ENCODE measurements at regions of chr9 and their contacts with region 1.

Region 1: DNA sequence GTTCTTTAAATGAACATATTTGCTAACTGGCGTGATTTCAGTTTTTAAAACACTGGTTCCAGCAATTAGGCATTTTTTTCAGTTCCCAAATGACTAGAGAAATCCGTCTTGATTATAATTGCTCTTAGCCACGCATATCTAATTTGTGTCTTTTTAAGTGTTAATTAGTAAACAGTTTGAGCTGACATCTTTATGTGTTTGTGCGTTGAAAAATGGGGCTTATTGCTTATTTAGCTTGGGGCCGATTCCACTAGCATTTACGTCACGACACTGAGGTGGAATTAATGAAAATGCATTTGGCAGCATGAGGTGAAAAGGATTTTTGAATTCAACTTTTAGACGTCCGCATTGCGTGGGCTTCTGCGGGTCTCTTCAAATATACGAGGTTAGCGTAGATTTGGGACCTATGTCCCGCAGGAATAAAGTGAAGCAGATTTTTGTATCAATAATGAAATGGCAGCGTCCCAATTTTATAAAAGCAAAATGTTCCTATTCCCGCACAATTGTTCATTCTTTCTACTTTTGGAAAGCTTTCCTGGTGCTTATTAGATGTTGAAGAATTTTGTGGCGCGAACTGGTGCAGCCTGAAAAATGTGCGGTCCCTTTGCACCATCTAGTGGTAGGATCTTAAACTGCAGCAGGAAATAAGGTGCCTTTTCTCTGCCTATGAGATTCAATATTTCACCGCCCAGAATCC is 122.7 kb upstream of the LMX1B start:
- DNase-seq: no peak
- ATAC-seq: peak; percentile 71
- H3K4me3 Mint-ChIP-seq: no peak overlapping the region
- H3K27ac Mint-ChIP-seq: no peak overlapping the region
- H3K4me1 Mint-ChIP-seq: peaks cover 8% of the 10 kb centered on the region
- H3K27me3 Mint-ChIP-seq: peaks cover 6% of the 10 kb centered on the region
- CTCF ChIP-seq: peak; percentile 64

Region 2: DNA sequence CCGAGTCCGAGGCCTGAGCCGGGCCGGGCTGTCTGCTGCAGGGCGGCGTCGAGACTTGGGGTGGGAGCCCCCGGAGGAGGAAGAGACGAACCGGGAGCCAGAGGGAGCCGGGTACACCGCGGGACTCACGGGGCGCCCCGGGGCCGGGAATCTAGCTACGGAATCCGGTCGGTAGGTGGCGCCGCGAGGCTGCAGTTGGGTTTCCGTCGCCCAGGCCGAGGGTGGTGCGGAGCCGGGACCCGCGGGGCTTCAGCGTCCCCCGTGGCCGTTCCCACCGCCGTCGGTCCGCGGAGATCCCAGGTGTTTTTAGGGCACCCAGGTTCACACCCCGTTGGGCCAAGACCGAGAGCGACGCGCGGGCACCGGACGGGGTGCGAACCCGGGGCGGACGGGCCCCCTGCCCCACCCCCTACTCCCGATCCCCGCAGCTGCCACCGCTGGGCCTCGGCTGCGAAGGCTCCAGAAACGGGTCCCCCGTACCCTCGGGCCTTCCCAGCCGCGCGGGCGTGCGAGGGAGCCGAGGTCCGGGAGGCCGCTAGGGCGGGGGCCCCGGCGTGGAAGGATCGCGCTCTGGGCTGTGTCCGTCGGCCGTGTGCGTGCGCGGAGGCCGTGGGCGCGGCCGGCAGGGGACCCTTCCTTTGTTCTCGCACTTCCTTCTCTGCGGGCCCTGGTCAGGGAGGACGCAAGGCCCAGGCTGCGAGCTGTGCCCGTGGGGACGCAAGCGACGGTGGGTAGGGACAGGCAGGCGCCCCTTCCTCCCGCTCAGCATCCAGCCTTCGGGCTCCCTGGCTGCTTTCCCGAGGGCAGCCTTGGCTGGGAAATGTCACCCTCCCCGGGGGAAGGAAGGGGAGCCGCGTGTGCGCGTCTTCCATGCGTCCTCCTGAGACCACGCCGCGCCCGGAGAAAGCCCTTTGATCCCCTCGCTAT is 1082.8 kb before region 1 on chr9:
- CTCF ChIA-PET with region 1: interaction called, 30 read pairs
- POLR2A ChIA-PET with region 1: no interaction called
- intact Hi-C with region 1: loop called (anchors 1 kb)
- DNase-seq: peak; percentile 79
- ATAC-seq: peak; percentile 86
- H3K4me3 Mint-ChIP-seq: peak overlapping the region; percentile 75
- H3K27ac Mint-ChIP-seq: no peak overlapping the region
- H3K4me1 Mint-ChIP-seq: peaks cover 16% of the 10 kb centered on the region
- H3K27me3 Mint-ChIP-seq: peaks cover 23% of the 10 kb centered on the region
- CTCF ChIP-seq: peak; percentile 68

Region 3: DNA sequence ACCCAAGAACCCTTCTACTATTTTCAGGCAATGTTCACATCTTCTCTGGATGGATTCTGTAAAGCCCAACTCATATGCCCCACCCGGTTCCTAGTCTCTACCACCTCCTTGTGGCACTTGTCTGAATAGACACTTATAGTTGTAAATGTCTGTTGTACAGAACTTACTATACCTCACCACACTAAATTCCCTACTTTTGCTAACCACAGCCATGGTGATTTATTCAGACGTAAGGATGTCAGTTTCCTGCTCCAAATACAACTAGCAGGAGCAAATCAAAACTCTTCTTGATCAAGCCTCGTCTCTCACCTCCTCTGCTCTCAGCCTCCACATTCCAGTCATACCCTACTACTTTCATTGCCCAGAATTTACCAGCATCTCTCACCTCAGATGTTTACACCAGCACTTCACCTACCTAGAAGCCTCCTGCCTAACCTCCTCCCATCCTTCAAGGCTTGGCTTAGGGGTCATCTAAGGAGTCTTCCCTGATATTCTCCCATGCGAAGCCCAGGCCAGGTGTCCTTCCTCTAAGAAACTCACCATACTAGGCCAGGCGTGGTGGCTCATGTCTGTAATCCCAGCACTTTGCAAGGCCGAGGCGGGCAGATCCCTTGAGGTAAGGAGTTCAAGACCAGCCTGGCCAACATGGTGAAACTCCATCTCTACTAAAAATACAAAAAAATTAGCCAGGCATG is 859.5 kb before region 1 on chr9:
- CTCF ChIA-PET with region 1: no interaction called
- POLR2A ChIA-PET with region 1: no interaction called
- intact Hi-C with region 1: loop called (anchors 10 kb)
- DNase-seq: no peak
- ATAC-seq: no peak
- H3K4me3 Mint-ChIP-seq: peak overlapping the region; percentile 59
- H3K27ac Mint-ChIP-seq: peak overlapping the region; percentile 90
- H3K4me1 Mint-ChIP-seq: peaks cover 84% of the 10 kb centered on the region
- H3K27me3 Mint-ChIP-seq: no peaks in the 10 kb centered on the region
- CTCF ChIP-seq: no peak

Region 4: GRCh38 chr9:126228781-126229444 is 262.1 kb before region 1 on chr9:
- CTCF ChIA-PET with region 1: interaction called, 4 read pairs
- POLR2A ChIA-PET with region 1: no interaction called
- intact Hi-C with region 1: loop called (anchors 1 kb)
- DNase-seq: peak; percentile 62
- ATAC-seq: peak; percentile 99
- H3K4me3 Mint-ChIP-seq: no peak overlapping the region
- H3K27ac Mint-ChIP-seq: no peak overlapping the region
- H3K4me1 Mint-ChIP-seq: peaks cover 1% of the 10 kb centered on the region
- H3K27me3 Mint-ChIP-seq: peaks cover 35% of the 10 kb centered on the region
- CTCF ChIP-seq: no peak

Region 5: DNA sequence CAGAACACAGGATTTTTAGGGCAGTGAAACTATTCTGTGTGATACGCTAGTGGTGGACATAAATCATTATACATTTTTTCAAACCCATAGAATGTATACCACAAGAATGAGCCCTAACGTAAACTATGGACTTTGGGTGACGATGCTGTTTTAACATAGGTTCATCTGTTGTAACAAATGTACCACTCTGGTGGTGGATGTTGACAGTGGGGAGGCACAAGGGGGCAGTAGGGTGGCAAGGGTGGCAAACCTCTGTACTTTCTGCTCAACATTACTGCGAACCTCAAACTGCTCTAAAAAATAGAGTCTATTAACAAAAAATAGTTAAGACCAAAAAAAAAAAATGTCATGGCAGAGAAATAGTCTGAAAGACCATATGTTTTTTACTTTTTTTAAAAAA is 173.5 kb before region 1 on chr9:
- CTCF ChIA-PET with region 1: interaction called, 38 read pairs
- POLR2A ChIA-PET with region 1: interaction called, 3 read pairs
- intact Hi-C with region 1: loop called (anchors 1 kb)
- DNase-seq: no peak
- ATAC-seq: peak; percentile 52
- H3K4me3 Mint-ChIP-seq: no peak overlapping the region
- H3K27ac Mint-ChIP-seq: no peak overlapping the region
- H3K4me1 Mint-ChIP-seq: no peaks in the 10 kb centered on the region
- H3K27me3 Mint-ChIP-seq: peaks cover 16% of the 10 kb centered on the region
- CTCF ChIP-seq: no peak

Region 6: GRCh38 chr9:126411225-126411947 is 79.6 kb before region 1 on chr9:
- CTCF ChIA-PET with region 1: interaction called, 3 read pairs
- POLR2A ChIA-PET with region 1: no interaction called
- intact Hi-C with region 1: loop called (anchors 5 kb)
- DNase-seq: no peak
- ATAC-seq: peak; percentile 88
- H3K4me3 Mint-ChIP-seq: peak overlapping the region; percentile 81
- H3K27ac Mint-ChIP-seq: peak overlapping the region; percentile 85
- H3K4me1 Mint-ChIP-seq: peaks cover 35% of the 10 kb centered on the region
- H3K27me3 Mint-ChIP-seq: no peaks in the 10 kb centered on the region
- CTCF ChIP-seq: no peak

Region 7: GRCh38 chr9:126558051-126558665 is 67.1 kb after region 1 on chr9:
- CTCF ChIA-PET with region 1: interaction called, 189 read pairs
- POLR2A ChIA-PET with region 1: no interaction called
- intact Hi-C with region 1: no loop called
- DNase-seq: peak; percentile 53
- ATAC-seq: peak; percentile 85
- H3K4me3 Mint-ChIP-seq: no peak overlapping the region
- H3K27ac Mint-ChIP-seq: peak overlapping the region; percentile 62
- H3K4me1 Mint-ChIP-seq: no peaks in the 10 kb centered on the region
- H3K27me3 Mint-ChIP-seq: peaks cover 31% of the 10 kb centered on the region
- CTCF ChIP-seq: no peak

Measured in activated B cell treated with CpG ODN at 0.5 μM for 24 hours (primary cell).